ENCODE measurements at regions of chr5 and their contacts with region 1.

Region 1: DNA sequence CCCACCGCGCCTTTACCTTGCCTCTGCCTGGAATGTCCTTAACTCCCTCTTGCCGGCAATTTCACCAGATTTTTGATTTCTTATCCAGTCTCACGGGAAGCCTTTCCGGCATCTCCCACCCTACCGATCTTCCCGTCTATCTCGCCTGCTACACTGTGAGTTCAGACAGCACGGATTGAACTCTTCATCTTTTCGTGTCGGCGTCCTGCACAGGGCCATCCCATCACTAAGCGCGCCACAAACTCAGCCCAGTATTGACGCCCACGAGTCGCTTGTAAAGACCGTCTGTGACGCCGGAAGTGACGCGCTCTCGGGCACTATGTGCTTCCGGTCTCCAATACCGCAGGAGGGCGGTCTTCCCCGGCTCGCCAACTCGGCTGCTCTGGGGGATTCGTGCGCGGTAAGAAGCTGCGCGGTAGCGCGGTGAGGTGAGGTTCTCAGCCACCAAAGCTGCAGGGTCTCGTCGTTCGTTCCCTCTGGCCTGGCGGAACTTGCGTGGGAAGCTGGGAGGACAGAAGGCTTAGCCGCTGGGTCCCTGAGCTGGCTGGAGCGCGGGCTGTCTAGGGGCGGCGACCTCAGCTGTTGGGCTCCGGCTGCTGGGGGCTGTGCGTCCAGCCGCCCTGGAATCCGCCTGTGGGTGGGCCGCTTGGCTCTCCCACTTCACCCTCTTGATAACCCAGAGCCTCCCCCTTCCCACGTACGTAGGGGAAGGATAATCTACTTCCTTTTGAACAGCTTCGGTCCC is at the start of gene ZCCHC9:
- DNase-seq: peak; percentile 96
- H3K4me3 ChIP-seq: peak within 1 kb of the TSS; percentile 77
- H3K27ac ChIP-seq: peak within 1 kb of the TSS; percentile 45
- H3K4me1 ChIP-seq: peaks cover 22% of the 10 kb centered on the region
- CTCF ChIP-seq: 0 out of 2 replicates have a peak, but pooled peaks have one; percentile 24
- total RNA-seq, gene ZCCHC9: 19.2 and 29.1 TPM in 2 replicates

Region 2: DNA sequence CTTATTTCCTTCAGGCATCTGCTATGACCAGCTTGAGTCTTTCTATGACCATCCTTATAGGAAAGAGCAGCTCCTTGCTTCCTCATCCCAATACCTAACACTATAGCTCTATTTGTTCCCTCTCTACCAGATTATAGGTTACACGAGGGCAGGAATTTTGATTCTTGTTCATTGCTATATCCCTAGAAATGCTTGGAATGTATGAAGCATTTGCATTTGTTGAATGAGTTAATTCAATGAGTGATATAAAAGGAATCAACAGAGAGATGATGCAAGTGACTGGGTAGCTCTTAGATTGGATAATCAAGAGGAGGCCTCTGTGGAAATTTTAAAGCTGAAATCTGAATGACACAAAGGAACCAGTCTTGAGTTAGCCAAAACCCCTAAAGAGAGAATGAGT is 13.9 kb after region 1 on chr5:
- CTCF ChIA-PET with region 1: no interaction called
- POLR2A ChIA-PET with region 1: interaction called, 14 read pairs
- intact Hi-C with region 1: no loop called
- DNase-seq: no peak
- H3K4me3 ChIP-seq: no peak overlapping the region
- H3K27ac ChIP-seq: no peak overlapping the region
- H3K4me1 ChIP-seq: no peaks in the 10 kb centered on the region
- CTCF ChIP-seq: no peak